Kidney (tissue), 22 donors: ENCODE measurements at regions of chr16 and their contacts with region 1.

Region 1: DNA sequence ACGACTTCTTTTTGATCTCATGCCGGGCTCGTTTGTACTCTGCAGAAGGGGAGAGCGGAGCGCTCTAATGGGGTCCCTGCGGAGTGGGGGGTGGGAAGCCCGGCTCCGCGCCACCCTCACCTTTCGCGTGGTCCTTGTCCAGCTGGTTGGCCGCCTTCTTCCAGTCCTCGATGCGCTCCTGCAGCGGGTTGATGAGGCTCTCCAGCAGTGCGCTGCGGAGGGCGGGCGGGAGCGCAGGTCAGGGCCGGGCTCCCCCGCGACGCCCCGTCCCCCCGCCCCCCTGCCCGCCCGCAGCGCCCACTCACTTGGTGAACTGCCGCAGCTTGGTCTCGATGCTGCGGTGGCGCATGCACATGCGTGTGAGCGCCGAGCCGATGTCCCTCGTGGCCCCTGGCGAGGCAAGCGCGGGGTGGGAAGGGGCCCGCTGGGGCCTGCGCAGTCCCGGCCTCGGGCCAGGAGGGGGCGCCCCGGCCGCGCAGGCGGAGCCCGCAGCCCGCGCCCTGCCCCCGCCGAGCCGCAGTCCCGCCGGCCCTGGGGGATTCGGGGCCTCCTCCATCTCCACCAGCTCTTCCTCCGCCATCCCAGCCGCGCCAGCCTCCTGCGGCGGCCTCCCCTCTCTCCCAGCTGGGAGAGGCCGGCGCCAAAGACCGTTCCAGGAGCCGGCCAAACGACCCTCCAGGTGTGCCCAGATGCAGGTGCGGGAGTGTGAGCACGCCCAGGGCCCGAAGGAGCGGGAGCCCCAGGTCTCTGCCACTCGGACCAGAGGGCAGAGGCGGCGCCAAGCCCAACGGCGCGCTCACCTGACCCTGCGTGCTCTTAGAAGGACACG is 6.0 kb downstream of the MTSS2 start:
- DNase-seq: peak in 4 of 5 donors; percentile 31 to 78 (median 56)
- H3K4me3 ChIP-seq: no peak overlapping the region
- H3K27ac ChIP-seq: no peak overlapping the region
- H3K4me1 ChIP-seq: peaks cover 0 to 31% (median 3%) of the 10 kb centered on the region in 3 donors
- H3K27me3 ChIP-seq: no peaks in the 10 kb centered on the region
- CTCF ChIP-seq: peak; percentile 62

Region 2: GRCh38 chr16:70770626-70771552 is 91.0 kb after region 1 on chr16:
- intact Hi-C with region 1: loop called (anchors 5 kb)
- DNase-seq: peak in 4 of 5 donors; percentile 74 to 81 (median 75)
- H3K4me3 ChIP-seq: no peak overlapping the region
- H3K27ac ChIP-seq: no peak overlapping the region
- H3K4me1 ChIP-seq: peaks cover 0 to 2% (median 0%) of the 10 kb centered on the region in 3 donors
- H3K27me3 ChIP-seq: no peaks in the 10 kb centered on the region
- CTCF ChIP-seq: peak; percentile 98